PC-9 (cell line): ENCODE measurements at regions of chr16 and their contacts with region 1.

Region 1: GRCh38 chr16:78684040-78684611 is 584.7 kb downstream of the WWOX start:
- DNase-seq: peak; percentile 69 to 70
- H3K4me3 ChIP-seq: no peak overlapping the region
- H3K27ac ChIP-seq: peak overlapping the region; percentile 32; the same call in 1 of the 2 replicates
- H3K4me1 ChIP-seq: no peaks in the 10 kb centered on the region; the same call in 1 of the 2 replicates
- H3K27me3 ChIP-seq: no peaks in the 10 kb centered on the region
- CTCF ChIP-seq: no peak

Region 2: GRCh38 chr16:78962457-78962929 is 278.4 kb after region 1 on chr16:
- CTCF ChIA-PET with region 1: no interaction called
- POLR2A ChIA-PET with region 1: no interaction called
- intact Hi-C with region 1: no loop called
- DNase-seq: peak in 1 of 2 experiments; percentile 37
- H3K4me3 ChIP-seq: no peak overlapping the region
- H3K27ac ChIP-seq: peak overlapping the region; percentile 29; the same call in 1 of the 2 replicates
- H3K4me1 ChIP-seq: 0 out of 2 replicates have a peak, but pooled peaks cover 12% of the 10 kb centered on the region
- H3K27me3 ChIP-seq: no peaks in the 10 kb centered on the region
- CTCF ChIP-seq: no peak

Region 3: GRCh38 chr16:78984887-78985464 is 300.9 kb after region 1 on chr16:
- CTCF ChIA-PET with region 1: no interaction called
- POLR2A ChIA-PET with region 1: no interaction called
- intact Hi-C with region 1: loop called (anchors 1 kb)
- DNase-seq: no peak
- H3K4me3 ChIP-seq: no peak overlapping the region
- H3K27ac ChIP-seq: no peak overlapping the region
- H3K4me1 ChIP-seq: peaks cover 37% of the 10 kb centered on the region
- H3K27me3 ChIP-seq: no peaks in the 10 kb centered on the region
- CTCF ChIP-seq: no peak